KBM-7 (cell line): ENCODE measurements at regions of chr2 and their contacts with region 1.

Region 1: GRCh38 chr2:64873472-64873924 is 115.7 kb upstream of the SLC1A4 start:
- DNase-seq: peak; percentile 86

Region 2: GRCh38 chr2:64359892-64360657 is 513.4 kb before region 1 on chr2:
- in situ Hi-C with region 1: loop called (anchors 25 kb)
- DNase-seq: no peak

Region 3: DNA sequence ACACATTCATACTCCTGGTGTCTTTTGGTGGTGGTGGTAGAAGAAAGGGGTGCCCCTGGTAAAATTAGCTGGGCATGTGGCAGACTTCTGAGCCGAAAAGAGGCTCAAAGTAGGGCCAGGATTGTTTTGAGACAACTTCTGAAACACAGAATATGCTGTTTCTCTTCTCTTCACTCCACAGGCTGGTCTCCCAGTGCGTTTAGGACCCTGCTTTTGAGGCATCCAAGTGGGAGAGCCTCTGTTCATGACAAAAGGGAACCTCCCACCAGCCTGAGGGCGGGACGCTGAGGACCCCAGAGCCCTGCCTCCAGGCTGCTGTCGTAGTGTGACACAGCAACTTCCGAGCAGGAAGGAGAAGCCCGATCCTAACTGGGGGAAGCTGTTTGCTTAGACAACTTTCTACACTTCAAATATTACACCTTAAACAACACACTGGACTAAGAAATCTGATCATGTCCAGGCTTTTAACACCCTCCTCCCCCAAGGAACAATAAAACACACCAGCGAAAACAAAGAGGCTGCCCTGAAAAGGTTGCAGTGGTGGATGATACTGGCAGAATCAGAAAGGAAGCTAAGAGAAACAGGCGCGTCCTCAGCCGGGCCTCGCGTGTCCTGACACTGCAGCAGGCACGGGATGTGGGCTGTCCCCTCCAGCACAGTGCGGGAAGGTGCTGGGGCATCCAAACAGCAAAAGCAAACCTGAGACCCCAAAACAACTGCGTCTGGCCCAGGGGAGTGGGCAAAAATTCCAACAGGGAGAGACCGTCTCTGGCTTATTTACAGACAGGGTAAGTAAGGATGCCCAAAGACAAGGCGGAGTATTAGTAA is 229.1 kb before region 1 on chr2:
- in situ Hi-C with region 1: loop called (anchors 25 kb)
- DNase-seq: peak; percentile 89

Region 4: DNA sequence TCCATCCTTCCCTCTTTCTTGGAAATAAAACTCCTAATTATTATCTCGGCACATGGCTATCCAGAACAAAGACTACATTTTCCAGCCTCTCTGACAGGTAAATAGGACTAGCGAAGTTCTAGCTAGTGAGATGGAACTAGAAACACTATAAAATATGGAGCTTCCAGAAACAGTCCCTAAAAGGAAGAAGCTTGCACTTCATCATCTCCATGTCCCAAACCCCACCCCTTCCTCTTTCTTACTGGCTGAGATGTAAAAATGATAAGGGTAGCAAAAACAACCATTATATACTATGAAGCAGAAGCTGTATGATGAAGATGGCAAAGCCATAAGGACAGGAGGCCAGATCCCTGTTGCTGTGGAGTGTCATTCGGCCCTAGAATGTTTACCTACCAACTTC is 342.4 kb after region 1 on chr2:
- in situ Hi-C with region 1: no loop called
- DNase-seq: peak; percentile 45